ENCODE measurements at regions of chr1 and their contacts with region 1.

Region 1: GRCh38 chr1:42766741-42767509 is at the starts of genes C1orf50 and P3H1:
- DNase-seq: peak; percentile 100
- H3K4me3 Mint-ChIP-seq: no peak within 1 kb of the TSS
- H3K27ac Mint-ChIP-seq: peak within 1 kb of the TSS; percentile 93
- H3K4me1 Mint-ChIP-seq: peaks cover 21% of the 10 kb centered on the region
- H3K27me3 Mint-ChIP-seq: no peaks in the 10 kb centered on the region
- total RNA-seq, gene C1orf50: 6.4 and 7.6 TPM in 2 replicates
- total RNA-seq, gene P3H1: 44.9 and 51.4 TPM in 2 replicates

Region 2: GRCh38 chr1:42456010-42456758 is 310.7 kb before region 1 on chr1 and contains the starts of genes PPCS and ZMYND12:
- intact Hi-C with region 1: loop called (anchors 1 kb)
- DNase-seq: peak; percentile 87
- H3K4me3 Mint-ChIP-seq: peak within 1 kb of the TSS; percentile 95
- H3K27ac Mint-ChIP-seq: peak within 1 kb of the TSS; percentile 98
- H3K4me1 Mint-ChIP-seq: peaks cover 28% of the 10 kb centered on the region
- H3K27me3 Mint-ChIP-seq: no peaks in the 10 kb centered on the region
- total RNA-seq, gene PPCS: 40.1 and 48.0 TPM in 2 replicates
- total RNA-seq, gene ZMYND12: not detected in 2 replicates

Region 3: DNA sequence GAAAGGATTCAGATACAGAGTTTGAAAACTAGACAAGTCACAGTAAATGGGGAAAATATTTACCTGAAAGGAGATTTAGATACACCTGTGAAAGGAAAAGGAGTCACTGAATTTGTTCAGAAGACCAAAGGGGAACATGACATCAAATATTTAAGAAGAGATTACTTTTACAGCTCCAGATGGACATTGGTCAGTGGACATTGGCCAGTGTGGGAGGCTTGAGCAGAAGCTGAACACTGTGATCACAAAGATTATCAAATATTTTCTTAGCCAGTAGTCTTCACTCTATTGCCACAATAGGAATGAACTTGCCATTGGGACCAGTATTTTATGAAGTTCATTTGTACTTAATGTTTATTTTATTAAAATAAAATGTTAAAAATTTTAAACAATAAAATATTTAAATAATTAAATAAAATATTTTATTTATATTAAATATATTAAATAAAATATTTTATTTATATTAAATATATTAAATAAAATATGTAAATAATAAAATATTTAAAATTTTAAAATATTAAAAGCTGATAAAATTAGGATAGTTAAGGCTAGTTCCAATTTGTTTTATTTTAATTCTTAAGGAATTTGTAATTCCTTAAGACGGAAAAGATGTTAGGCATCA is 209.6 kb before region 1 on chr1:
- intact Hi-C with region 1: no loop called
- DNase-seq: no peak
- H3K4me3 Mint-ChIP-seq: no peak overlapping the region
- H3K27ac Mint-ChIP-seq: no peak overlapping the region
- H3K4me1 Mint-ChIP-seq: no peaks in the 10 kb centered on the region
- H3K27me3 Mint-ChIP-seq: peaks cover 6% of the 10 kb centered on the region

Region 4: DNA sequence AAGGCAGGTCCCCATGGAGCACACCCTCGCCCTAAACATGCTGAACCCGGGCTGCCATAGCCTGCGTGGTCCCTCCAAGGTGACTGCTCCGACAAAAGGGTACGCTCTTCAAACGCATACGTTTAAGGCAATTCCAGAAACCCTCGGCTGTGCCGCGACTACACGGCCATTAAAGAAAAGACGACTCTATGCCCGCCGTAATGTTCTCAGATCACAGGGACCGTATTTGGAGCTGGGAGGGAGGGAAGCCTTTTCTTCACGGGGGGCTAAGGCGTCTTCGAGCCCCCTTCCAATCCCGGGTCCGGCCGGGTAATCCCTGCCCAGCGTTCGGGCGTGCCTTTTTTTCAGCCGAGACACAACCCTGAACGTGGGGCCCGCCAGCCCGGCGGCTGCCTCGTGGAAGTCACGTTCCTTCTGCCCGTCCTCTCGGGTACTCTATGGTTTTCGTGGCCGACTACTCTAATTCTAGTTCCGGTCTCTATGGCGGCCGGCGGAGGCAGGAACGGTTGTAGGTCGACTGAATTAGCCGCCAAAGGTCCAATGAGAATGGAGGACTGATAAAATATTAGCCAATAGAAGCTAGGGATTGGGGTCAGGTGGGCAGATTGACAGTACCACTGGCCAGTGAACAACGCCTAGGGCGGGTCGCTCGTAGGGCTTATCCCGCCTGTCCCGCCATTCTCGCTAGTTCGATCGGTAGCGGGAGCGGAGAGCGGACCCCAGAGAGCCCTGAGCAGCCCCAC is 85.0 kb before region 1 on chr1 and contains the start of gene YBX1:
- intact Hi-C with region 1: loop called (anchors 1 kb)
- DNase-seq: peak; percentile 93
- H3K4me3 Mint-ChIP-seq: peak within 1 kb of the TSS; percentile 97
- H3K27ac Mint-ChIP-seq: peak within 1 kb of the TSS; percentile 94
- H3K4me1 Mint-ChIP-seq: peaks cover 57% of the 10 kb centered on the region
- H3K27me3 Mint-ChIP-seq: no peaks in the 10 kb centered on the region
- total RNA-seq, gene YBX1: 774 and 780 TPM in 2 replicates

Region 5: DNA sequence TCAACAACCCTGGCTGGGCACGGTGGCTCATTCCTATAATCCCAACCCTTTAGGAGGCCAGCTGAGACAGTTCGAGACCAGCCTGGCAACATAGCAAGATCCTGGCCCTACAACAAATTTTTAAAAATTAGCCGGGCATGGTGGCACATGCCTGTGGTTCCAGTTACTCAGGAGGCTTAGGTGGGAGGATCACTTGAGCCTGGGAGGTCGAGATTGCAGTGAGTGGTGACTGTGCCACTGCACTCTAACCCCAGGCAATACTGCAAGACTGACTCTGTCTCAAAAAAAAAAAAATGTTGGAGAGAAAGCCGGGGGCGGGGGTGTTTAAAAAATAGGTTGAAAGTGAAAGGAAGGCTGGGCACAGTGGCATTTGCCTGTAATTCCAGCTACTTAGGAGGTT is 43.4 kb before region 1 on chr1:
- intact Hi-C with region 1: no loop called
- DNase-seq: no peak
- H3K4me3 Mint-ChIP-seq: no peak overlapping the region
- H3K27ac Mint-ChIP-seq: no peak overlapping the region
- H3K4me1 Mint-ChIP-seq: peaks cover 6% of the 10 kb centered on the region
- H3K27me3 Mint-ChIP-seq: no peaks in the 10 kb centered on the region

Region 6: GRCh38 chr1:42733475-42734191 is 33.3 kb before region 1 on chr1:
- intact Hi-C with region 1: no loop called
- DNase-seq: no peak
- H3K4me3 Mint-ChIP-seq: no peak overlapping the region
- H3K27ac Mint-ChIP-seq: no peak overlapping the region
- H3K4me1 Mint-ChIP-seq: peaks cover 11% of the 10 kb centered on the region
- H3K27me3 Mint-ChIP-seq: no peaks in the 10 kb centered on the region

Region 7: GRCh38 chr1:42816585-42817434 is 49.9 kb after region 1 on chr1 and contains the starts of genes ERMAP and SVBP:
- intact Hi-C with region 1: loop called (anchors 1 kb)
- DNase-seq: peak; percentile 90
- H3K4me3 Mint-ChIP-seq: peak within 1 kb of the TSS; percentile 79
- H3K27ac Mint-ChIP-seq: peak within 1 kb of the TSS; percentile 80
- H3K4me1 Mint-ChIP-seq: peaks cover 19% of the 10 kb centered on the region
- H3K27me3 Mint-ChIP-seq: no peaks in the 10 kb centered on the region
- total RNA-seq, gene ERMAP: 3.4 and 3.7 TPM in 2 replicates
- total RNA-seq, gene SVBP: 6.4 and 8.2 TPM in 2 replicates

Region 8: GRCh38 chr1:42924082-42924850 is 157.3 kb after region 1 on chr1:
- intact Hi-C with region 1: loop called (anchors 1 kb)
- DNase-seq: peak; percentile 91
- H3K4me3 Mint-ChIP-seq: peak overlapping the region; percentile 90
- H3K27ac Mint-ChIP-seq: peak overlapping the region; percentile 96
- H3K4me1 Mint-ChIP-seq: peaks cover 50% of the 10 kb centered on the region
- H3K27me3 Mint-ChIP-seq: no peaks in the 10 kb centered on the region

Region 9: GRCh38 chr1:43358746-43359693 is 592.1 kb after region 1 on chr1 and contains the start of gene CDC20:
- intact Hi-C with region 1: loop called (anchors 2 kb)
- DNase-seq: peak; percentile 99
- H3K4me3 Mint-ChIP-seq: peak within 1 kb of the TSS; percentile 96
- H3K27ac Mint-ChIP-seq: peak within 1 kb of the TSS; percentile 92
- H3K4me1 Mint-ChIP-seq: peaks cover 50% of the 10 kb centered on the region
- H3K27me3 Mint-ChIP-seq: no peaks in the 10 kb centered on the region
- total RNA-seq, gene CDC20: 82.9 and 91.8 TPM in 2 replicates

Region 10: DNA sequence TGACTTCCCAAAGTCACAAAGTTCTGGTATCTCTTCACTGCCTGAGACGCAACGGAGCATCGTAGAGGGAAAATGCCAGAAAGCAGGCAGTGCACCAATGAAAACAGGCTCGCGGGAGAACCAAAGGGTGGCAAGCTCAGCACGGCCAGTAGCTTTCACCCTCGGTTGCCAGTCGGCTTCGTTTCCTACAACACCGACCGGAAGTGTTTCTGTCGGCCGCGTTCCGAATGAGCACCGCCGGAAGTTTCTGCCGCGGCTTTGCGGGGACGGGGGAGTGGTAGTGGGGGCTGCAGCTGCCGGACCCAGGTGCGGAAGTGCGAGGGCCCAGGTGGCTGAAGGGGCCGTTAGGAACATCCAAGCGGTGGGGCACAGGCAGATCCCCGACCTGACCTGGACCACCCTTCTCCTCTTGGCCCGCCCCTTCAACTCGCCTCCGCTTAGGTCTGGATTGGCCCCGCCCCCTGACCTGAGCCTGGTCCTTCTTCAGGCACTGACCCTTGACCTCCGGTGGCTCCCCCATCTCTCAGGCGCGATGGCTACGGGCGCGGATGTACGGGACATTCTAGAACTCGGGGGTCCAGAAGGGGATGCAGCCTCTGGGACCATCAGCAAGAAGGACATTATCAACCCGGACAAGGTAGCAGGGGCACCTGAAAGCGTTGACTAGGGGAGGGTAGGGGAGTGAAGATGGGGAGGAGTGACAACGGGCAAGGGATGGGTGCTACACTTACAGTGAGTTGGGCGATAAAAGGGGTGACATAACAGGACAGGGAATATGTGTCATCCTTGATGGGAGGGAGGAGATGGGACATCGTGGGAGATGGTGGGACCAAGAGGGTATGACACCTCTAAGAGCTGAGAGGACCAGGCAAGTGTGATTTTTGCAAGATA is 1446.5 kb after region 1 on chr1 and contains the start of gene DMAP1:
- intact Hi-C with region 1: loop called (anchors 5 kb)
- DNase-seq: peak; percentile 83
- H3K4me3 Mint-ChIP-seq: peak within 1 kb of the TSS; percentile 90
- H3K27ac Mint-ChIP-seq: peak within 1 kb of the TSS; percentile 91
- H3K4me1 Mint-ChIP-seq: peaks cover 39% of the 10 kb centered on the region
- H3K27me3 Mint-ChIP-seq: peaks cover 8% of the 10 kb centered on the region
- total RNA-seq, gene DMAP1: 37.4 and 38.1 TPM in 2 replicates

Measured in activated T-helper 1 cell treated with anti-CD3 and anti-CD28 coated beads, Interleukin-12 subunit alpha, Interleukin-12 subunit beta, Interleukin-2, Interleukin-4 antibody, amounts not matched to agents 30 ng/mL and 10 ng/mL and 1 ng/mL, durations not matched to agents 14 hours and 24 hours and 36 hours (primary cell).